Naive thymus-derived CD8-positive, alpha-beta T cell (primary cell): ENCODE measurements at regions of chr22 and their contacts with region 1.

Region 1: DNA sequence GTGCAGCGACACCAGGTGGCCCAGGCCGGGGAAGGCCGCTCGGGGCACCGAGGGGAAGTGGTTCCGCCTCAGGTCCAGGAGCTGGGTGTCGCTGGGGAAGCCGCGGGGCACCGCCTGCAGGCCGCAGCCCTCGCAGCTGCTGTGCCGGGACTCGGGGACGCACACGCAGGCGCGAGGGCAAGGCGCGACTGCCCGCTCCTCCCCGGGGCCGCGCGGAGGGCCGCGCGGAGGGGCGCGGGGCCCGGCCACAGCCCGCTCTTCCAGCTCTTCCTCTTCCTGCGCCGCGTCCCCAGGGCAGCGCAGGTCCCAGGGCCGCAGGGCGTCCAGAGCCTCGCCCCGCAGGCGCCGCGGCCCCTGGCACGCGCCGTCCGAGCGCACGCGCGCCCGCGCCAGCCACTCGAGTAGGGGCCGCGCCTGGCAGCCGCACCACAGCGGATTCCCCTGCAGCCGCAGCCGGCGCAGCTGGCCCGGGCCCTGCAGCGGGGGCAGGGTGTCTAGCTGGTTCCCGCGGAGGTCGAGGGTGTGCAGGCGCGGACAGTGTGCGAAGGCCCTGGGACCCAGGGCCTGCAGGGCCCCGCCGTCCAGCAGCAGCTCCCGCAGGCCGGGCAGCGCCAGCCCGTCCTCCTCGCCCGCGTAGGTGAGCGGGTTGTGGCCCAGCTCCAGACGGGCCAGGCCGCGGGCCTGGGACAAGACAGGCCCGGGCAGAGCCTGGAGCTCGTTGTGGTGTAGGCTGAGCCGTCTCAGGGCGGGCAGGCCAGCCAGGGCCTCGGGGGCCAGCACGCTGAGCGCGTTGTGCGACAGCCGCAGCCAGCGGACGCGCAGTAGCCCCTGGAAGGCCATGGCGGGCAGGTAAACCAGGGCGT is 2.8 kb downstream of the CHADL start:
- DNase-seq: peak in 9 of 10 donors; percentile 71 to 89 (median 82)
- ATAC-seq: peak; percentile 96 to 97
- H3K4me3 Mint-ChIP-seq: peak overlapping the region in 9 of 10 donors; percentile 50 to 81 (median 71)
- H3K27ac Mint-ChIP-seq: peak overlapping the region in 3 of 10 donors; percentile 64 to 79 (median 67)
- H3K4me1 Mint-ChIP-seq: peaks cover 3 to 17% (median 5%) of the 10 kb centered on the region in 4 donors
- H3K27me3 Mint-ChIP-seq: no peaks in the 10 kb centered on the region

Region 2: GRCh38 chr22:40922484-40923303 is 315.2 kb before region 1 on chr22:
- POLR2A ChIA-PET with region 1: interaction called, 18 read pairs
- DNase-seq: peak in 7 of 10 donors; percentile 5 to 75 (median 44)
- ATAC-seq: peak; percentile 89 to 94
- H3K4me3 Mint-ChIP-seq: peak overlapping the region in 9 of 10 donors; percentile 2 to 56 (median 28)
- H3K27ac Mint-ChIP-seq: peak overlapping the region; percentile 15 to 91 (median 76)
- H3K4me1 Mint-ChIP-seq: peaks cover 3 to 8% (median 4%) of the 10 kb centered on the region in 4 donors
- H3K27me3 Mint-ChIP-seq: no peaks in the 10 kb centered on the region

Region 3: DNA sequence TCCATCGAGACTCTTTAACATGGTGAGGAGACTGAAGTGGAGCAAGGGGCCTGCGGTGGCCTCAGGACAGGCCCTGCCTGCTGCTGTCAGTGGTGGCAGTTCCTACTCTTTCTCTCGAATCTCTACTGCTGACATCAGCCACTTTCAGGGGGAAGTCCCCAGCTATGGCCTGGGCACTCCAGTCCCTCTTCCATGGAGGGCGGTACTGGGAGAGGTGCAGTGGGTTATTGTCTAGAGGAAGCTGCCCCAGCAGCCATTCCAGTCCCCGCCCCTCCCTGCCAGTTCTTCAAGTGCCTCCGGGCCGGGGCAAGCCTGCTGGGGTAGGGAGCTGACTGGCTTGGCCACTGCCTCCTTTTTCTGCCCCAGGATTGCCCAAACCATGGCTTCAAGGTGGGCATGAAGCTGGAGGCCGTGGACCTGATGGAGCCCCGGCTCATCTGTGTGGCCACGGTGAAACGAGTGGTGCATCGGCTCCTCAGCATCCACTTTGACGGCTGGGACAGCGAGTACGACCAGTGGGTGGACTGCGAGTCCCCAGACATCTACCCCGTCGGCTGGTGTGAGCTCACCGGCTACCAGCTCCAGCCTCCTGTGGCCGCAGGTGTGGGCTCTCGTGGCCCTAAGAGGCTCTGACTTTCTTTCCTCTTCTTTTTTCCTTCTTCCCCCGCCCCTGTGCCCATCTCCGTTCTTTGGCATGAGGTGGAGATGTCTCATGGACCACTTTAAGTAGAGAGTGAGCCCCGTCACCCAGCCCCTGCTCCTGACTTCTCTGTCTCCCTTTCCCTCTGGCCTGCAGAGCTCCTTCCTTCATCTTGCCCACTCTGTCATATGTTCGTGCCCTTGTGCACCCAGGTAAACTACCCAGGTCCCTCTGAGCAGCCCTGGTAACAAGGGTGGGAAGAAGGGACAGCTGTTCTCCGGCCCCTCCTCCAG is 10.9 kb before region 1 on chr22:
- POLR2A ChIA-PET with region 1: interaction called, 10 read pairs
- DNase-seq: no peak
- ATAC-seq: no peak
- H3K4me3 Mint-ChIP-seq: no peak overlapping the region
- H3K27ac Mint-ChIP-seq: peak overlapping the region in 1 of 10 donors; percentile 62
- H3K4me1 Mint-ChIP-seq: peaks cover 0 to 4% (median 0%) of the 10 kb centered on the region in 4 donors
- H3K27me3 Mint-ChIP-seq: no peaks in the 10 kb centered on the region